Right ventricle myocardium superior (tissue), 1 donor: ENCODE measurements at regions of chr6 and their contacts with region 1.

Region 1: DNA sequence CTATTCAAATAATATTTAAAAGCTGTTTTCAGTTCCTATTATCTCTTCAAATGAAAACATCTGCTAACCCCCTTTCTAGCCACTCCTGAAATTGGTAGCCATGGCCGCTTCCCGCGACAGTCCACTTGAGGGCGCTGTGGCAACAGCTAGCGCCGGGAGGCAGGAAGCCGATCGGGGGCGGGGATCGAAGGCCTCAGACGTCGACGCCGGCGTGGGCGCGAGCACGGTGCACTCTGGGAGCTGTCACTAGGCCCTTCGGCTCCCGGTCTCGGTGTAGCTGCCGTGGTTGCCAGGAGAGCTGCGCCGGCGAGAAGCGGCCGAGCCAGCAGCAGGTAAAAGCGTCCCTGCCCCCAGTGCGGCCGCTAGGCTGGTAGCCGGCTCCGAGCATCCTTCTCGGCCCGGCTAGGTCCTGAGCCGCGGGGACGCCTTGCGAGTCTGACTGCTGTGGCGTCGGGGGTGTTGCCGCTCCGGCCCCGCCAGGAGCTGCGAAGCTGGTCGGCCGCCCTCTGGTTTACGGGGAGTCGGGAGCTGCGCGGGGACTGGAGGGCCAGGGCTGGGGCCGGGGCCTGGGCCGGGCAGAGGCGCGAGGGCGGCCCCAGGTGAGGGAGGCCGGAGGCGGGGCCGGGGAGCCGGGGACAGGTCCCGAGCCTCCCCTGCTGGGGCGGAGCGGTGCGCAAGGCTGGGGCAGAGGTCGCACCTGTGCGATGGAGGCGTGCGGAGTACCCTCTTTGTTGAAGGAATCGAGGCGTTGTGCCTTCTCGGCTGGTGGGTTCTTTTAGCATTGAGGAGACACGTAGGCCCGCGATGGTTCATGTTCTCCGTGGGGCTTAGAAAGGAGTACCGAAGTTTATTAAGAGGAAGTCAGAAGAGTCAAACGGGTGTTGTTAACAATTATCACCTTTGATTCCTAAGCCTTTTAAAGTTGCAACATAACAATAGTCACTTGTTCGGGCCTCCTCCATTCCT is at the start of gene DOP1A:
- DNase-seq: peak; percentile 98
- ATAC-seq: peak; percentile 97
- total RNA-seq, gene DOP1A: 13.0 TPM

Region 2: GRCh38 chr6:82878812-82879211 is 188.9 kb before region 1 on chr6:
- intact Hi-C with region 1: no loop called
- DNase-seq: no peak
- ATAC-seq: no peak

Region 3: DNA sequence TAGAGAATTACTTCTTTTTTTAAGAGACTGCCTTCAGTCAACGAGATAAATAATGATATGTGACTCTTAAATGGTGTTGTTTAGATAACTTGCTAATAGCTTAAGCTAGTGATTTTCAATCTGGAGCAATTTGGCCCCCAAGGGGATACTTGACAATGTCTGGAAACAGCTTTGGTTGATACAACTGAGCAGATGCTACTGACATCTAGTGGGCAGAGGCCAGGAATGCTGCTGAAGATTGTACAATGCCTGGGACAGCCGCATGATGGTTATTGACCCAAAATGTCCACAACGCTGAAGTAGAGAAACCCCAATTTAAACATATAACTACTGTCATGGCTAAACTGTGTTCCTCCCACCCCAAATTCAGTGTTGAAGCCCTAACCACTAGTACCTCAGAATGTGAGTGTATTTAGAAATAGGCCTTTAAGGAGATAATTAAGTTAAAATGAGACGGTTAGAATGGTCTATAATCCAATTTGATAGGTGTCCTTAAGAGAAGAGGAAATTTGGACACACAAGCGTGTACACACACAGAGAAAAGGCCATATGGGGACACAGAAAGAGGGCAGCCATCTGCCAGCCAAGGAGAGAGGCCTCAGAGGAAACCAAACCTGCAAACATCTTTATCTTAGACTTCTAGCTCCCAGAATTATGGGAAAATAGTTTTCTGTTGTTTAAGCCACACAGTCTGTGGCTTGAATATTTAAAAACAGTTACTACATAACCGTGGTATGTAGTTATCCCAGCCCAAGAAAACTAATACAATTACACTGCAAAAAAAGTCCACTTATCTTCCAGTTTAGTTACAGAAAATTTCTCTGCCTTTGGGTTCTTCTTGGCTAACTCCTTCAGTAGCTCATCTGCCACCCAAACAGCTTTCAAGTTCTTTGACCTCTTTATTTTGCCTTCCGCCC is 147.7 kb after region 1 on chr6:
- intact Hi-C with region 1: loop called (anchors 5 kb)
- DNase-seq: peak; percentile 52
- ATAC-seq: peak; percentile 97